ENCODE measurements at regions of chr20 and their contacts with region 1.

Region 1: GRCh38 chr20:21719592-21720214 is 14.2 kb downstream of the PAX1 start:
- DNase-seq: peak; percentile 45
- ATAC-seq: no peak
- H3K4me3 ChIP-seq: no peak overlapping the region
- H3K27ac ChIP-seq: no peak overlapping the region
- H3K4me1 ChIP-seq: no peaks in the 10 kb centered on the region
- H3K27me3 ChIP-seq: peaks cover 6% of the 10 kb centered on the region; the same call in 1 of the 2 replicates
- CTCF ChIP-seq: peak; percentile 77; the same call in 1 of the 2 replicates

Region 2: GRCh38 chr20:21767739-21768223 is 48.1 kb after region 1 on chr20:
- CTCF ChIA-PET with region 1: interaction called, 17 read pairs
- POLR2A ChIA-PET with region 1: no interaction called
- in situ Hi-C with region 1: no loop called
- intact Hi-C with region 1: no loop called
- DNase-seq: no peak
- ATAC-seq: no peak
- H3K4me3 ChIP-seq: no peak overlapping the region
- H3K27ac ChIP-seq: no peak overlapping the region
- H3K4me1 ChIP-seq: no peaks in the 10 kb centered on the region
- H3K27me3 ChIP-seq: no peaks in the 10 kb centered on the region
- CTCF ChIP-seq: peak; percentile 68

Region 3: GRCh38 chr20:21826976-21827375 is 107.3 kb after region 1 on chr20:
- CTCF ChIA-PET with region 1: no interaction called
- POLR2A ChIA-PET with region 1: no interaction called
- in situ Hi-C with region 1: no loop called
- intact Hi-C with region 1: no loop called
- DNase-seq: no peak
- ATAC-seq: no peak
- H3K4me3 ChIP-seq: no peak overlapping the region
- H3K27ac ChIP-seq: no peak overlapping the region
- H3K4me1 ChIP-seq: no peaks in the 10 kb centered on the region
- H3K27me3 ChIP-seq: no peaks in the 10 kb centered on the region
- CTCF ChIP-seq: no peak

Region 4: DNA sequence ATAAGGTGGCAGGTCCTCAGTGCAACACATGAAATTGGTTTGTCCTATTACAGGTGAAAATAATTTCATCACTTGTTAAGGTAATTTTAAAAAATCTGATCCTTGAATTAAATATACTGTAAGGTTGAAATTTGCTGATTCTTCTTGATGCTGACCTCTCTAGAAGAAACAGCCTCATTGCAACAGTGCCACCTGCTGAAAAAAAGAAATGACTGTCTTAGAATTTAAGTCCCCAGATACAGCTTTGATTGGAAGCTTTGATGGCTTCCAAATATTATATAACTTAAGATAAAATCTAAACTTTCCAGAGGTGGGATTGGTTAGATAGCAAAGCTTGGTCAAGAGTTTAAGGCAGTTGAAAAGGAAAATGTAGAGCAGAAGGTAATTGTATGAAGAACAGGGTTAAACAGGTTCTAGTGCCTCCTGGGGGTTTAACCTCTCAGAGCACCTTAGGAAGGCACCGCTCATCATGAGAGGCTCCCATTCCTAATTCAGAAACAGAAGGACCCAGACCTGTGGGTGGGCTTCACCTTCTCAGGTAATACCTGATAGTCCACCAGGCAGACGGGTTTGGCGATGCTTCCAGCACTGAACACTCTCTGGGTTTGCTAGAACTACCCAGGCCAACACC is 386.7 kb after region 1 on chr20:
- CTCF ChIA-PET with region 1: interaction called, 8 read pairs
- POLR2A ChIA-PET with region 1: no interaction called
- in situ Hi-C with region 1: no loop called
- intact Hi-C with region 1: loop called (anchors 1 kb)
- DNase-seq: peak; percentile 12
- ATAC-seq: no peak
- H3K4me3 ChIP-seq: no peak overlapping the region
- H3K27ac ChIP-seq: no peak overlapping the region
- H3K4me1 ChIP-seq: no peaks in the 10 kb centered on the region
- H3K27me3 ChIP-seq: no peaks in the 10 kb centered on the region
- CTCF ChIP-seq: peak; percentile 63; the same call in 1 of the 2 replicates

Region 5: DNA sequence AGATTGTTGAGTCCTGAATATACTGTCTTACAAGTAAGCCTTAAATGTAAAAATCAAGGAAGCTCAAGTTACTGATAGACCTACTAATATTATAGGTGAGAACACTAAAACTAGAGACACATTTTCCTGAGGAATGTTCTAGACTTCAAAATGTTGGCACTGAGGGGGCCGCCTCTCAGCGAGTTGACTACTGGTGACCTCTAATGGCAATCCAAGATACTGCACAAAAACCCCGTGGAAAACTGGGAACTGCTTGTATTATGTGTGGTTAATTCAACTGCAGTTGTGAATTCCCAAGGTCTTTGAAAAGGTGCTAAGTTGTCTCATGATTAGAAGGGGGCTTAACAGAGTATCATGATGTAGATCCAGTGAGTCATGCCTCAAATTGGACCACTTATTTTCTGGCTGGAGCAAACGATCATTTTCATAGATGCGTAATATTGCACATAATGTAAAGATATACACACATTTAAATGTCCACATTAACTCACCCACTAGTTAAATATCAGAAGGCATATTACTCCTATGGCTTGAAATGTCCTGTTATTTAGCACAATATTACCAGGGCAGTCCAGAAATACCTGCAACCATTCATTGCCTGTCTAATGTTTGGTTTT is 528.5 kb after region 1 on chr20:
- CTCF ChIA-PET with region 1: no interaction called
- POLR2A ChIA-PET with region 1: no interaction called
- in situ Hi-C with region 1: no loop called
- intact Hi-C with region 1: loop called (anchors 2 kb)
- DNase-seq: no peak
- ATAC-seq: no peak
- H3K4me3 ChIP-seq: no peak overlapping the region
- H3K27ac ChIP-seq: no peak overlapping the region
- H3K4me1 ChIP-seq: no peaks in the 10 kb centered on the region
- H3K27me3 ChIP-seq: no peaks in the 10 kb centered on the region; the same call in 1 of the 2 replicates
- CTCF ChIP-seq: peak; percentile 82

Region 6: DNA sequence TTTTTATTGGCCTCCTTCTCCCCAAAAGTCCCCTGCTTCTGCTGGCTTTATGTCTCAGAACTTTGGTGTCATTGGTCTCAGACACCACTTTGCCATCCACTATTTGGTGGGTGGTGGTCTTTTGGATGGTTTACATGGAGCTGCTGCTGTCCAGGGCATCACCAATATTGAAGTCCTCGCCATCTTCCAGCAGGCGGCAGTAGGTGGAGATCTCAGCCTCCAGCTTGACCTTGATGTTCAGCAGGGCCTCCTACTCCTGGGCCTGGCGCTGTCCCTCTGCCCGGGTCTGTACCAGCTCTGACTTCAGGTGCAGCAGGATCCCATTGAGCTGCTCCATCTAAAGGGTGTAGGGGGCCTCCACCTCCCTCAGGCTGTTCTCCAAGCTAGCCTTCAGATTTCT is 1013.0 kb after region 1 on chr20:
- CTCF ChIA-PET with region 1: no interaction called
- POLR2A ChIA-PET with region 1: no interaction called
- in situ Hi-C with region 1: no loop called
- intact Hi-C with region 1: no loop called
- DNase-seq: no peak
- ATAC-seq: no peak
- H3K4me3 ChIP-seq: no peak overlapping the region
- H3K27ac ChIP-seq: no peak overlapping the region
- H3K4me1 ChIP-seq: no peaks in the 10 kb centered on the region
- H3K27me3 ChIP-seq: no peaks in the 10 kb centered on the region
- CTCF ChIP-seq: peak; percentile 24; the same call in 1 of the 2 replicates